ENCODE measurements at regions of chr7 and their contacts with region 1.

Region 1: GRCh38 chr7:106659963-106660861 is 746 bp downstream of the CCDC71L start:
- DNase-seq: peak; percentile 92
- ATAC-seq: peak; percentile 72
- H3K4me3 Mint-ChIP-seq: peak overlapping the region; percentile 86
- H3K27ac Mint-ChIP-seq: peak overlapping the region; percentile 94
- H3K4me1 Mint-ChIP-seq: peaks cover 31% of the 10 kb centered on the region
- H3K27me3 Mint-ChIP-seq: no peaks in the 10 kb centered on the region

Region 2: GRCh38 chr7:106112117-106112971 is 547.9 kb before region 1 on chr7 and contains the start of gene SYPL1:
- CTCF ChIA-PET with region 1: interaction called, 3 read pairs
- POLR2A ChIA-PET with region 1: no interaction called
- intact Hi-C with region 1: loop called in 1 of 2 experiments (anchors 1 kb)
- DNase-seq: peak; percentile 95
- ATAC-seq: peak; percentile 86
- H3K4me3 Mint-ChIP-seq: peak within 1 kb of the TSS; percentile 79
- H3K27ac Mint-ChIP-seq: peak within 1 kb of the TSS; percentile 89
- H3K4me1 Mint-ChIP-seq: peaks cover 64% of the 10 kb centered on the region
- H3K27me3 Mint-ChIP-seq: no peaks in the 10 kb centered on the region
- total RNA-seq, gene SYPL1: 23.7 to 28.8 TPM

Region 3: GRCh38 chr7:106339513-106340246 is 320.5 kb before region 1 on chr7:
- CTCF ChIA-PET with region 1: no interaction called
- POLR2A ChIA-PET with region 1: no interaction called
- intact Hi-C with region 1: no loop called
- DNase-seq: no peak
- ATAC-seq: peak; percentile 40
- H3K4me3 Mint-ChIP-seq: no peak overlapping the region
- H3K27ac Mint-ChIP-seq: peak overlapping the region; percentile 3
- H3K4me1 Mint-ChIP-seq: peaks cover 21% of the 10 kb centered on the region
- H3K27me3 Mint-ChIP-seq: peaks cover 5% of the 10 kb centered on the region

Region 4: DNA sequence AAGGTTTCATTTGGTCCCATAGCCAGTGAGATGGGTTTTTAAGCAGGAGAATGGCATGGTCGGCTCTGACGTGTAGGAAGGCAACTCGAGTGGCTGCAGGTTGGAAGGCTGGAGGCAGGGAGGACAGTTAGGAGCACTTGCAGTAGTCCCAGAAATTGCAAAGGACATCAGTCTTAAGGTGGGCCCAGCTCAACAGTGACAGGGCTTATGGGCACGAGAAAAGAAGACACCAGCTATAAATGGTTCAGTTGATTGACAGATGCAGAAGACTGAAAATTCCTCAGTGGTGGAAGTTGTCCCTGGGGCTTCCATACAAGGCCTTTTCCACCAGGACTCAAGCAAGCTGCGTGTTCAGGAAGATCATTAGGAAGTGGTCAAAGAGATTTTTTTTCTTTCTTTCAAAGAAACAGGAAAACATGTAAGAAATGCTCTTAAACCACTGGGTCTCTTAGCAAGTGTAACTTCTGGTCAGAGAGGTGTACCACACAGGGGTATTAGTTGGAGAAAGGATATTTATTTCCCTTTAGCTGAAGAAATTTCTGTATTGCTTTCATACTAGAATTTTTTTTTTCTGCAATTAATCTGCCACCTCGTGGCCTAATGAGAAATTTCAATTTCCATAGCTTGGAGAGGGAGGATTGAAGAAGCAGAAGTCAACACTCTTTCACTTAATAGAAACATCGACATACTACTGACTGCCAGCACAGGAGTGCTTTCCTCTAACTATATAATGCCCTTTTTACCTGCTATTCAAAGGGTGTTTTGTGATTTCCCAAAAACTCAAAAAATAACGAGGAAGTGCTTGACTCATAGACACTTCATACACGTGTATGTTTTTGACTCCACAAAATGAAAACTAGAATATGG is 198.0 kb before region 1 on chr7:
- CTCF ChIA-PET with region 1: no interaction called
- POLR2A ChIA-PET with region 1: no interaction called
- intact Hi-C with region 1: loop called in 1 of 2 experiments (anchors 1 kb)
- DNase-seq: no peak
- ATAC-seq: peak; percentile 69
- H3K4me3 Mint-ChIP-seq: peak overlapping the region; percentile 8
- H3K27ac Mint-ChIP-seq: peak overlapping the region; percentile 75
- H3K4me1 Mint-ChIP-seq: peaks cover 36% of the 10 kb centered on the region
- H3K27me3 Mint-ChIP-seq: no peaks in the 10 kb centered on the region

Region 5: DNA sequence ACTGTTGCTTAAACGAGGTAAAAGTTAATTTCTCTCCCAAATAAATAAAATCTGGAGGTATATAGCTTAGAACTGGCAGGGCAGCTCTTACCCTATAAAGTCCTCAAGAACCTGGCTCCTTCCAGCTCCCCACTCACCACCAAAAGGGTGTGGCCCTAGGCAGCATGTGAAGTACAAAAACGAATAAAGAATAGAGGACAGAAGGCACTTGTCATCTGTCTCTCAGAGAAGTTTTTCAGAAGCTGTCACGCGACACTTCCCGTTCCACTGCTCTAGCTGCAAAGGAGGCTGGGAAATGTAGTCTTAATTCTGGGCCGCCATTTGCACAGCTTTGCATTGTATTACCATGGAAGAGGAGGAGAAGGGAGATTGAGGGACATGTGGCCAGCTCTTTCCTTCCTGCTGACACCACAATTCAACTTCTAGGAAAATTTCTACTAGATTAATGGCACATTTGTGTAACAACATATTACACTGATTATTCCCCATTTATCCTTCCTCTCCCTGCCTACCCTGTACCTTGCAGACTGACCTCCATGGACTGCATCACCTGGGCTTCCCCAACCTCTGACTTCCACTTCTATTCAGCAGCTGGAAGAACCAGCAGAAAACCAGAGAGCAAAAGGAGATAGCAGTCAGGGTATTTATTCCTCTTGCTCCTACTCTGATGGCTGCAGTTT is 61.4 kb before region 1 on chr7:
- CTCF ChIA-PET with region 1: interaction called, 8 read pairs
- POLR2A ChIA-PET with region 1: no interaction called
- intact Hi-C with region 1: loop called in 1 of 2 experiments (anchors 1 kb)
- DNase-seq: peak; percentile 83
- ATAC-seq: peak; percentile 99
- H3K4me3 Mint-ChIP-seq: no peak overlapping the region
- H3K27ac Mint-ChIP-seq: no peak overlapping the region
- H3K4me1 Mint-ChIP-seq: peaks cover 2% of the 10 kb centered on the region
- H3K27me3 Mint-ChIP-seq: peaks cover 4% of the 10 kb centered on the region

Region 6: DNA sequence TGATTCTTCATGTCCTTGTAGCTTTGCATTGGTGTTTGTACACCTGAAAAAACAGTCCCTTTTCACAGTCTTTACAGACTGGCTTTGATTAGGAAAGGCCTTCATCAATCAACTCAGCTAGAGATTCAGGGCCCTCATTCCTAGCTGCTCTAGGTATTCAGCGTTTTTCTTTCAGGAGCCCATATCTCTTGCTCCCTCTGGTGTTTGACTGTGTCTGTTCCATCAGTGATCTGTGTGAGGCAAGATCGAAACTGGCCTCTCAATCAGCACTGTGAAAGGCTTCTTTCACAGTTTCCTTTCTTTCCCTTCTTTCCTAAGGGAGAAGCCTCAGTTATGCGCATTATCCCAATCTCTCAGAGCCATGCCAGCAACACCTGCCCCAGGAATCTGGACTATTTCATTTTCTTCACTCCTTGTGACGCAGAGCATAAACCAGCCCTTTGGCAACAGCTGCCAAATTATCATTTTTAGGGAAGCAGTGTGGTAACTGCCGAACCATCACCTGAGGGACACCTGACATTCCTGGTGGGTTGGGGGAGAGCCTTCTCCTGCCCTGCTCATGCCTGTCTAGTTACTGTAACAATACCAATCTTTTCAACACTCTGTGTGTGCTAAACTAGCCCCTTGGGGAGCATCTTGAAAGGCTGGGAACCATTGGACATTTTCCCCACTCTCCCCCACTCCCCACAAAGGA is 76.4 kb after region 1 on chr7:
- CTCF ChIA-PET with region 1: interaction called, 92 read pairs
- POLR2A ChIA-PET with region 1: no interaction called
- intact Hi-C with region 1: loop called (anchors 1 kb)
- DNase-seq: peak; percentile 60
- ATAC-seq: peak; percentile 95
- H3K4me3 Mint-ChIP-seq: no peak overlapping the region
- H3K27ac Mint-ChIP-seq: peak overlapping the region; percentile 75
- H3K4me1 Mint-ChIP-seq: peaks cover 37% of the 10 kb centered on the region
- H3K27me3 Mint-ChIP-seq: no peaks in the 10 kb centered on the region

Region 7: GRCh38 chr7:106870983-106871410 is 210.8 kb after region 1 on chr7:
- CTCF ChIA-PET with region 1: interaction called, 5 read pairs
- POLR2A ChIA-PET with region 1: no interaction called
- intact Hi-C with region 1: loop called (anchors 5 to 10 kb)
- DNase-seq: no peak
- ATAC-seq: peak; percentile 82
- H3K4me3 Mint-ChIP-seq: no peak overlapping the region
- H3K27ac Mint-ChIP-seq: no peak overlapping the region
- H3K4me1 Mint-ChIP-seq: peaks cover 72% of the 10 kb centered on the region
- H3K27me3 Mint-ChIP-seq: no peaks in the 10 kb centered on the region

Measured in activated CD4-positive, alpha-beta T cell treated with anti-CD3 and anti-CD28 coated beads for 36 hours (primary cell).